Gastrocnemius medialis (tissue), 4 donors: ENCODE measurements at regions of chr6 and their contacts with region 1.

Region 1: DNA sequence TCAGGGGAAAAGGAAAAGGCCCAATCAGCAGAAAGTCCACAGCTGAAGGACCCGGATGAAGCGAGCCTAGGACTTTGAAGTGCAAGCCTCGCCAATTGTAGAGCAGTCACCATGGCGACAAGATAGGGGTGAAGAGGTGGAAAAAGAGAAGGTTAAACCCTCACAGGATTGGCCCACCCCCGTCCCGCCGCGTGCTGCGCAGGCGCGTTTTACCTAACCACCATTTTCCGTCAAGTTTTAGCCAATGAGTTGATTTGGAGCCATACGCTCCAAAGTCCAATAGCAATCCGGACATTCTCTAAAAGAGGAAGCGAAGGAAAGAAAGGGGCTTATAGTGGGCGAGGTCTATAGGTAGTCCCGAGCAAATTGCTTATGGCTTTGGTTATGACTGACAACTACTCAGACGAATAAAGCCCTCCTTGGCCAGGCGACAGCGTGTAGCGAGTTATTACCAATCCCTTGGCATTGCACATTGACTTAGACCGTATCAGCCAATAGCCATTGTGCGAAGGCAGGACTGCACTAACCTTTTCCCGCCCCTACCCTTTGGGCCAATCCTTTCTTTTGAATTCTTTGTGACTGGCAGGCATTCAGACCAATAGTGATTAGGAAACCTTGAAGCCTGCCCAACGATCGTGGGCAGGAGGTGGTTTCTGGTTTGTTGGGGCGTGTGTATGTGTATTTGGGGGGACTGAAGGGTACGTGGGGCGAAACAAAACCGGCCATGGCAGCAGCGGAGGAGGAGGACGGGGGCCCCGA is at the start of gene RNF5:
- DNase-seq: peak; percentile 98 to 99
- ATAC-seq: peak; percentile 84 to 88
- H3K4me3 ChIP-seq: peak within 1 kb of the TSS; percentile 81 to 99 (median 96)
- H3K27ac ChIP-seq: peak within 1 kb of the TSS; percentile 92 to 99 (median 96)
- H3K4me1 ChIP-seq: peaks cover 41 to 46% of the 10 kb centered on the region in 2 donors
- H3K27me3 ChIP-seq: no peaks in the 10 kb centered on the region
- CTCF ChIP-seq: no peak
- POLR2A ChIP-seq: peak; percentile 46 to 63
- total RNA-seq, gene RNF5: 54.6 to 98.3 (median 78.1) TPM

Region 2: DNA sequence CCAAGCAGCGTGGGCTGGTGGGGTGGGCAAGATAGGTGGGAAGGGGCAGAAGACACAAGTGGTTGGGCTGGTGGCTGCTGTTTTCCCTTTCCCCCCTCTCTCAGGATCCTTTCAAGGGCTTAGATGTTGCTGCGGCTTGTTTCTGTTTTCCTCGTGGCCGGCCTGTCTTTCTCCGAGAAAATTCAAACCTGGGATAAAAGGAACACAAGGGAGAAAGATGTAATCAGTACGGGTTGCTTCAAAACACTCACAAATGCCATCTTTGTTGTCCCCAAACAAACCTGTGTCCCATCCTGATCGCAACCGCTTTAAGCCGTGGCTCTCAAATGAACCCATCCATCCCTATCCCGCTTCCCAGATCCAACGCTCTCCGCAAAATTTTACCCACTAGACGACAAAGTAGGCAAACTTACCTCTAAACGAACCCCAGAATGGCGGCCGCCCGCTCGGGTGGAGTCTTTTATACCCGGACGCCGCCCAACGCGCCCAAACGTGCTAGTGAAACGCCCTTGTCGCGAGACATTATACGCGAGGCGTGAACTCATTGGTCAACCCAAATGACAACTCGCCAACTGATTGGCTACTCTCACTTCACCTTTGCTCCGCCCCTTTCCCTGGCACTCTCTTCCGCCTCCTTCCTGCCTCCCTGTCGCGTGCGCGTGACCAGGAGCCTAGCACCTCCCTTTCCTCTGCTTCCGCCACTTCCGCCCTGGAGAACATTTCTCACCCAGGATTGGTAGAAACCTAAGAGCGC is 1561.0 kb before region 1 on chr6 and contains the start of gene PPP1R10:
- in situ Hi-C with region 1: loop called in 1 of 4 experiments (anchors 25 kb)
- intact Hi-C with region 1: no loop called
- DNase-seq: peak; percentile 100
- ATAC-seq: peak; percentile 79 to 81
- H3K4me3 ChIP-seq: peak within 1 kb of the TSS; percentile 71 to 89 (median 82)
- H3K27ac ChIP-seq: peak within 1 kb of the TSS; percentile 95 to 99 (median 98)
- H3K4me1 ChIP-seq: peaks cover 34 to 40% of the 10 kb centered on the region in 2 donors
- H3K27me3 ChIP-seq: no peaks in the 10 kb centered on the region
- CTCF ChIP-seq: no peak
- POLR2A ChIP-seq: peak; percentile 100
- total RNA-seq, gene PPP1R10: 24.1 to 31.5 (median 27.0) TPM

Region 3: DNA sequence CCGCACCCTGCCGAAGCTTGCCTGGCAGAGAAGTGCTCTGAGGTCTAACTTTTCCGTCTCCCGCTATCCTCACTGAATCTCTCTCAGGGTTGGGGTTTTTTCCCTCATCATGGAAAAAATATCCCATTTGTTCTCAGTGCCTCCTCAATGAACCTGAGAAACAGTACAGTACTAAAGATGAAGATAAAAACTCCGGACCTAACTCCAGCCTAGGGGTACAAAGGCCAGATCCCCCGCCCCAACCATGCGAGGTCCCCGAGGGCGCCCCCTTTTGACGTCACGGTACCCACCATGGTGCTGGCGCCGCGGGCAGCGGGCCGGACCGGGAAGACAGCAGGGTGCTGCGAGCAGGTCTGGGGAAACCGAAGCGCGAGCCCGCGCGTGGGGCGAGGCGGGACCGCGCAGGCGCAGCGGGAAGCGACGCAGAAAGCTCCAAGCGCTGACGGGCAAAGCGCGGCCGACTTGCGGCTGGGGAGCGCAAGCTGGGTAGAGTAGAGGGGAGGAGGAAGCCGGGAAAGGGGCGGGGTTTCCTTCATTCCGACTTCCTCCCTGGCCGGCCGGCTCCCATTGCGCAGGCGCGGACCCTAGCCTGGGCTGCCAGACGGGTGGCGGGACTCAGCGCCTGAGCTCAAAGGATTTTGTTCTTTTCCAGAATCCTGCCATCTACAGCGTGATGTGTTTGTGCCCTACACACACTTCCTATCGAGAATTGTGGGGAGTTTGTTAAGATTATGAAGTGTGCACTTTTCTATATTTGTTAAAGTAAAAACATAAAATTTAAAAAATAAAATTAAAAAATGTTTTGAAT is 371.3 kb before region 1 on chr6 and contains the start of gene LSM2:
- in situ Hi-C with region 1: loop called in 1 of 4 experiments (anchors 25 kb)
- intact Hi-C with region 1: no loop called
- DNase-seq: peak; percentile 98
- ATAC-seq: peak; percentile 97 to 99
- H3K4me3 ChIP-seq: peak within 1 kb of the TSS; percentile 61 to 87 (median 78)
- H3K27ac ChIP-seq: peak within 1 kb of the TSS; percentile 90 to 99 (median 95)
- H3K4me1 ChIP-seq: peaks cover 9 to 12% of the 10 kb centered on the region in 2 donors
- H3K27me3 ChIP-seq: no peaks in the 10 kb centered on the region
- CTCF ChIP-seq: peak in 3 of 5 experiments; percentile 11 to 30 (median 20)
- POLR2A ChIP-seq: peak; percentile 90 to 93
- total RNA-seq, gene LSM2: 25.1 to 43.7 (median 32.9) TPM

Region 4: GRCh38 chr6:31971993-31972708 is 205.8 kb before region 1 on chr6 and contains the start of gene DXO:
- in situ Hi-C with region 1: loop called in 1 of 4 experiments (anchors 25 kb)
- intact Hi-C with region 1: loop called (anchors 10 kb)
- DNase-seq: peak; percentile 94 to 95
- ATAC-seq: peak; percentile 97 to 98
- H3K4me3 ChIP-seq: peak within 1 kb of the TSS; percentile 74 to 91 (median 85)
- H3K27ac ChIP-seq: peak within 1 kb of the TSS; percentile 90 to 97 (median 92)
- H3K4me1 ChIP-seq: peaks cover 23 to 29% of the 10 kb centered on the region in 2 donors
- H3K27me3 ChIP-seq: no peaks in the 10 kb centered on the region
- CTCF ChIP-seq: no peak
- POLR2A ChIP-seq: peak; percentile 67 to 74
- total RNA-seq, gene DXO: 5.8 to 11.5 (median 8.5) TPM

Region 5: DNA sequence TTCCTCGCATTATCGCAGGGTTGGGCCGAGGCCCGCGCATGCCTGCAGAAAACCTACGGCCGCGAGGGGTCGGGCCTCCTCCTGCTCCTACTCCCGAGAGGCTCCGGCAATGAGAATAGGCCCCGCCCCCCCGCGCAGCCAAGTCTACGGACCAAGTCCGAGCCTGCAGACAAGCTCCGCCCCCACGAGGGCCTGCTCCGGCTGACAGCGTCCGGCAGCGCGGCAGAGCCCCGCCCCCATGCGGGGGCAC is 17.6 kb after region 1 on chr6:
- in situ Hi-C with region 1: no loop called
- intact Hi-C with region 1: loop called (anchors 1 kb)
- DNase-seq: peak; percentile 100
- ATAC-seq: peak in 1 of 2 donors; percentile 83
- H3K4me3 ChIP-seq: peak overlapping the region in 3 of 4 donors; percentile 67 to 86 (median 74)
- H3K27ac ChIP-seq: peak overlapping the region; percentile 91 to 98 (median 96)
- H3K4me1 ChIP-seq: peaks cover 28 to 32% of the 10 kb centered on the region in 2 donors
- H3K27me3 ChIP-seq: no peaks in the 10 kb centered on the region
- CTCF ChIP-seq: peak in 4 of 5 experiments; percentile 54 to 70 (median 56)
- POLR2A ChIP-seq: no peak

Region 6: DNA sequence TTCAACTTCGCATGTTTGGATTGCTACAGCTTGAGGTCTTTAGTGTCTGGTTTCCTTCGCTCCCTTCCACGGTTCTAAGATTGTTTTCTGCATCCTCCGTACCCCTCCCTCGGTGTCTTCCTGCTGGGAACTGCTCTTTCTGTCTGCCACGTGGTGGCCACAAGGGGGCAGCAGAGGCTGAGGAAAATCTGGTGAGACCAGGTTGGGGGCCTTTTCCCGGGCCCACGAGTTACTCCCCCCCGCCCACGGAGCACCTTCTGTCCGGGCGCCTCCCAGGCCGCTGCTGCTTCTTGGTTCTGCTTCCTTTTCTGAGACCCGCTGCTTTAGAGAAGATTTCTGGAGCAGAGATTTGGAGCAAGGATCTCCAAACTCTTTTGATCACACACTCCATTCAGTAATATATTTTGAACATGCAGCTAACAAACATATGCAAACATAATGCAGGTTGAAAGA is 67.0 kb after region 1 on chr6:
- in situ Hi-C with region 1: no loop called
- intact Hi-C with region 1: no loop called
- DNase-seq: peak; percentile 39 to 63
- ATAC-seq: peak; percentile 74 to 81
- H3K4me3 ChIP-seq: peak overlapping the region in 1 of 4 donors; percentile 33
- H3K27ac ChIP-seq: peak overlapping the region; percentile 17 to 72 (median 60)
- H3K4me1 ChIP-seq: peaks cover 5 to 6% of the 10 kb centered on the region in 2 donors
- H3K27me3 ChIP-seq: no peaks in the 10 kb centered on the region
- CTCF ChIP-seq: peak; percentile 70 to 89 (median 86)
- POLR2A ChIP-seq: no peak

Region 7: DNA sequence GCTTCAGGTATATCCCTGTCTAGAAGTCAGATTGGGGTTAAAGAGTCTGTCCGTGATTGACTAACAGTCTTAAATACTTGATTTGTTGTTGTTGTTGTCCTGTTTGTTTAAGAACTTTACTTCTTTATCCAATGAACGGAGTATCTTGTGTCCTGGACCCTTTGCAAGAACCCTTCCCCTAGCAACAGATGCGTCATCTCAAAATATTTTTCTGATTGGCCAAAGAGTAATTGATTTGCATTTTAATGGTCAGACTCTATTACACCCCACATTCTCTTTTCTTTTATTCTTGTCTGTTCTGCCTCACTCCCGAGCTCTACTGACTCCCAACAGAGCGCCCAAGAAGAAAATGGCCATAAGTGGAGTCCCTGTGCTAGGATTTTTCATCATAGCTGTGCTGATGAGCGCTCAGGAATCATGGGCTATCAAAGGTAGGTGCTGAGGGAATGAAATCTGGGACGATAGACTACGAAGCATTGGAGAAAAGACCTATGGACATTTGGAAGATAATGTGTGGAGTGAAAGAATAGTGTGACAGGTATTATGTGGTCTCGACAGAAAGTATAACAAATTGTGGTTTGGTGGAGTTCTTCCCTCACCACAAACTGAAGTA is 261.7 kb after region 1 on chr6 and contains the start of gene HLA-DRA:
- in situ Hi-C with region 1: no loop called
- intact Hi-C with region 1: no loop called
- DNase-seq: no peak
- ATAC-seq: peak; percentile 84 to 90
- H3K4me3 ChIP-seq: peak within 1 kb of the TSS; percentile 31 to 63 (median 45)
- H3K27ac ChIP-seq: peak within 1 kb of the TSS; percentile 53 to 81 (median 70)
- H3K4me1 ChIP-seq: no peaks in the 10 kb centered on the region
- H3K27me3 ChIP-seq: no peaks in the 10 kb centered on the region
- CTCF ChIP-seq: no peak
- POLR2A ChIP-seq: peak; percentile 19 to 62
- total RNA-seq, gene HLA-DRA: 43.7 to 98.5 (median 57.3) TPM

Region 8: DNA sequence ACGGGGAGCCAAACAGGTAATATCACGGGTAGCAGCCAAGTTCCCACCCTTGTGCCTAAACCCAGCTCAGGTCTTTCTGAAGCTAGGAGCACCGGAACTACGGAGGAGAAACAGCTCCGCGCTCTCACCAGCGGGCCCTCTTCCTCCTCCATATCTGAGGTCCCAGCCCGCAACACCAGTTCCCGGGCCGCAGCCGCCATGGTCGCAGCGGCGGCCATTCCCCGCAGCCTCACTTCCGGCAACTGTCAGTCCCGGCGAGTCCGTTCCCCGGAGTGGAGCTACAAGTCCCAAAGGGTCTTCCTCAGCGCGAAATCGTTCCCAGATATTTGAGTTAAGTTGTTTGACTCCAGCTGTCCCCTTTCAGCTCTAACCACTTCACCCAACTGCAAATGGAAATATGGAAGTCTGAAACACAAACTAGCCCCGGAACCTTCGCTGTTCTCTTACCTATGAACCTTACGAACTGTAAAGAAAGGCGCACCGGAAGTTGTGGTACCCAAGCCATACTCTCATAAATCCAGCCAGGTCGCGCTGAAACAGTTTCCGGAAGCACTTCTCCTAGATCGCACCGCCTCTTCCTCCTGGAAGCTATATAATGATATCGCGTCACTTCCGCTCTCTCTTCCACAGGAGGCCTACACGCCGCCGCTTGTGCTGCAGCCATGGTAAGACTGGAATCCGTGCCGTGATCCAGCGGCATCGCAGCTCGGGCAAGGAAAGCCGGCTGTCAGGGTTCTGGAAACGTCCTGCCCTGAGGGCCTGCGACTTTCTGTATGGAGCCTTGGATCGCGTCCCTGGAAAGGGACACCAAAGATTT is 1093.7 kb after region 1 on chr6 and contains the starts of genes RPS18 and VPS52:
- in situ Hi-C with region 1: no loop called
- intact Hi-C with region 1: loop called (anchors 10 kb)
- DNase-seq: peak; percentile 95 to 96
- ATAC-seq: peak; percentile 98 to 99
- H3K4me3 ChIP-seq: peak within 1 kb of the TSS; percentile 67 to 95 (median 80)
- H3K27ac ChIP-seq: peak within 1 kb of the TSS; percentile 85 to 96 (median 90)
- H3K4me1 ChIP-seq: peaks cover 46 to 53% of the 10 kb centered on the region in 2 donors
- H3K27me3 ChIP-seq: no peaks in the 10 kb centered on the region
- CTCF ChIP-seq: no peak
- POLR2A ChIP-seq: peak; percentile 92 to 95
- total RNA-seq, gene RPS18: 1,834 to 2,142 (median 2,010) TPM
- total RNA-seq, gene VPS52: 28.7 to 52.8 (median 41.2) TPM